ENCODE measurements at regions of chr18 and their contacts with region 1.

Region 1: GRCh38 chr18:11149441-11150270 is at the start of gene PIEZO2:
- DNase-seq: peak; percentile 84
- ATAC-seq: peak; percentile 78
- H3K4me3 Mint-ChIP-seq: peak within 1 kb of the TSS; percentile 71
- H3K27ac Mint-ChIP-seq: peak within 1 kb of the TSS; percentile 88
- H3K4me1 Mint-ChIP-seq: peaks cover 52% of the 10 kb centered on the region
- H3K27me3 Mint-ChIP-seq: peaks cover 43% of the 10 kb centered on the region
- CTCF ChIP-seq: no peak
- total RNA-seq, gene PIEZO2: 10.7 to 16.9 TPM (median 15.1 TPM) in 3 replicates

Region 2: DNA sequence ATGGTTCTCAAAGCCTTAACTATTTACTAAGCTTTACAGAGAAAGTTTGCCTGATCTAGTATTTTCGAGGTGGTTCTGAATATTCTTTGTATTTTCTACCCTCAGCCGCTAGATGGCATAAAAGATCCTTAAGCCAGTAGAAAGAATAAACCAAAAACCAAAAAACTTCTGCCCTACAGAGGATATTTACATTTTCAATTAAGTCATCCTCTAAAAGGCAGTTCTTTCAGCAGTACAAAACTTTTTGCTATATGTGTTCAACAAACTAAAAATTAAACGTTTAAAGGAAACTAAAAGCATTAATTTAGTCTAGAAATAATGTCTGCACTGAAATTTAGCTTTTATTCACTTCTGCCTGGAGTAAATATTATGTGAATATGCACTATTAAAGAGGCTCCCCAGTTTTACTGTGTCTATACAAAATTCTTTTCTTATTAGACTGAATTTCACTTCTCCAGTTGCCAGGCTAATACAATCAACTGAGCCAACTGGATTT is 297.8 kb before region 1 on chr18:
- CTCF ChIA-PET with region 1: interaction called, 20 read pairs
- POLR2A ChIA-PET with region 1: no interaction called
- DNase-seq: no peak
- ATAC-seq: no peak
- H3K4me3 Mint-ChIP-seq: no peak overlapping the region
- H3K27ac Mint-ChIP-seq: no peak overlapping the region
- H3K4me1 Mint-ChIP-seq: peaks cover 63% of the 10 kb centered on the region
- H3K27me3 Mint-ChIP-seq: no peaks in the 10 kb centered on the region
- CTCF ChIP-seq: peak; percentile 53

Region 3: DNA sequence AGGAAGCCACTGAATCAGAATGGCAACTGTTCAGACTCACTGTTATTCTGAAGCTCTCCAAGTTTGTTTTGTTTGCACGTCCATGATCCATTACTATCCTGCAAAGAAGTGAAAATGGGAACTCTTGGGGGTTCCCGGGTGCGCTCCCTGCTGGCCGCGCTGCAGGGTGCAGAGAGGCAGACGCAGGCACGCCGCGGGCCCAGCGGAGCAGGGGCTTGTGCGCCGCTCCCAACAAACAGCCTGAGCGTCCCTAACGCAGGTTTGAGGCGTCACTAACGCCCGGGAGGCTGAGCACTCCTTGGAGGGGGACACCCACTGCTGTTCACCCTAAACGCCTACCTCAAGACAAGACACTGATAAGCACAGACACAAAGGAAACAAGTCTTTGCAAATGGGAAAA is 14.0 kb after region 1 on chr18:
- CTCF ChIA-PET with region 1: interaction called, 12 read pairs
- POLR2A ChIA-PET with region 1: no interaction called
- DNase-seq: peak; percentile 64
- ATAC-seq: peak; percentile 87
- H3K4me3 Mint-ChIP-seq: no peak overlapping the region
- H3K27ac Mint-ChIP-seq: no peak overlapping the region
- H3K4me1 Mint-ChIP-seq: peaks cover 14% of the 10 kb centered on the region
- H3K27me3 Mint-ChIP-seq: peaks cover 67% of the 10 kb centered on the region
- CTCF ChIP-seq: peak; percentile 31; the same call in 1 of the 2 replicates

Measured in WTC11 (cell line).